ENCODE measurements at regions of chr1 and their contacts with region 1.

Region 1: DNA sequence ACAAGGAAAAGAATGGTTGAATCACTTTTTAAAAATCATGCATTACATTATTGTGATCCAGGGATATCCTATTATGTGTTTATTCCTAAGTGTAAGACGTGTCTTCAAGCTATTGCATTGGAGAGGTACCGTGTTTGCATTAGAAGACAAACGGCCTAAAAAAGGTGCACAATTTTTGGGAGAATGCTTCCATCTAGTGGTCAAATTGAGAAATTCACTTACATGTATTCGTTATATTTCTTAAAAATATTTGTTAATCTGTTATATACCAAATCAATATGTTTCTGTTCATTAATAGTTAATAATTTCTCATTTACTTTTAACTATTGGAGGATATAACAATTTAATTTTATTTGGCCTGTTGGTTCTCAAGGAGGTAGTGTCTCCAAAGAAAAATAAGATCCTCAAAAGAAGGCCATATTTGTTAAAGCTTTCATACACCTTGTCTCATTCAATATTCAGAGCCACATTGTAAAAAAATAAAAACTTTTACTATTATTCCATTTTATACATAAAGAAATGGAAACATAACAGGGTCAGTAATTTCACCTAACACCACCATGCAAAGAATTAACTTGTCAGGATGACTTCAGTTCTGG is 40.5 kb upstream of the KCTD3 start:
- DNase-seq: no peak

Region 2: GRCh38 chr1:214213136-214213535 is 1313.5 kb before region 1 on chr1:
- intact Hi-C with region 1: loop called (anchors 10 kb)
- DNase-seq: no peak

Region 3: GRCh38 chr1:214328770-214329469 is 1197.7 kb before region 1 on chr1:
- intact Hi-C with region 1: loop called (anchors 5 kb)
- DNase-seq: peak; percentile 65 to 97 (median 84)

Region 4: GRCh38 chr1:214623430-214623829 is 903.2 kb before region 1 on chr1:
- intact Hi-C with region 1: loop called (anchors 10 kb)
- DNase-seq: no peak

Region 5: DNA sequence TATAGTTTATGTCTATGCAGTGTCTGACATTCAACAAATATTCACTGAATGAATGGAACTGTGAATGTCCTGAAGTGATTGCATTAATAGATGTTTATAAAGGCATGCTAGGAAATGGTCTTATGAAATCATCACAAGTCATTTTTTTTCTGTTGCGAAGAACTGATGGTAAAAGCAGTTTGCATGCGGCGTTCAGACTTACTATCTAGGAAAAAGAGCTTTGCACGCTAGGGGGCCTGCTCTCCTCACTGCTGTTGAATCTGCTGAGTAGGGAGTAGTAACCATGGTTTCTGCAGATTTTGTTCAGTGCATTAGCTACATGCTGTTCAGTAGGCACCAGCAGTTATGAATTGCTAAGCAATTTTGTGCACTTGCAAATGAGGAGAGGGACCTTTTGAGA is 865.8 kb before region 1 on chr1:
- intact Hi-C with region 1: loop called (anchors 2 kb)
- DNase-seq: peak; percentile 43 to 94 (median 68)

Measured in posterior cingulate gyrus (tissue), 11 donors.